SK-N-SH (cell line): ENCODE measurements at regions of chr14 and their contacts with region 1.

Region 1: GRCh38 chr14:68911594-68912227 is 67.4 kb downstream of the ACTN1 start:
- DNase-seq: peak; percentile 92
- H3K4me3 ChIP-seq: no peak overlapping the region; a peak in 1 of 4 replicates
- H3K27ac ChIP-seq: peak overlapping the region in 1 of 2 experiments; percentile 51; a peak in 2 of 4 replicates
- H3K4me1 ChIP-seq: peaks cover 0 to 3% of the 10 kb centered on the region in 2 experiments; a peak in 1 of 4 replicates
- H3K27me3 ChIP-seq: no peaks in the 10 kb centered on the region
- CTCF ChIP-seq: peak; percentile 99
- EP300 ChIP-seq: no peak
- RAD21 ChIP-seq: peak; percentile 95

Region 2: GRCh38 chr14:68862954-68863594 is 48.6 kb before region 1 on chr14:
- CTCF ChIA-PET with region 1: interaction called, 17 read pairs
- POLR2A ChIA-PET with region 1: no interaction called
- DNase-seq: peak; percentile 79
- H3K4me3 ChIP-seq: no peak overlapping the region; a peak in 1 of 4 replicates
- H3K27ac ChIP-seq: no peak overlapping the region
- H3K4me1 ChIP-seq: no peaks in the 10 kb centered on the region
- H3K27me3 ChIP-seq: no peaks in the 10 kb centered on the region
- CTCF ChIP-seq: peak; percentile 84
- EP300 ChIP-seq: no peak
- RAD21 ChIP-seq: peak; percentile 88

Region 3: DNA sequence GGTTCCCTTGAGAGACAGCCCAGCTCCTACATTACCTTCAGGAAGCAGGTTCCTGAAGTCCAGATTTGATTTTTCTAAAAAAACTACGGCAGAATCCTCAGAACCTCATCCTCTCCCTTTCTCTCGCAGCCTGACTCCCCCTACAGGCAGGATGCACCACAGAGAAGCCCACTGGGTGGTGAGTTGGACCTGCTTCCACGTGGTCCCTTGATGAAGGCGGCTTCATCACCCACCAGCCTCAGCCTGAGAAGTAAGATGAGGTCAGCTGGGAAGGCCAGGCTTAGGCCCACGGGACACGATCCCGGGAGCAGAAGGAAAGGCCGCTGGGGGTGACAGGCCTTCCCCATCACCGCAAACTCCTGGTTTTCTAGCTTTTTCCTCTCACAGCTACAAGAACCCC is 15.6 kb before region 1 on chr14:
- CTCF ChIA-PET with region 1: interaction called, 51 read pairs
- POLR2A ChIA-PET with region 1: no interaction called
- DNase-seq: no peak
- H3K4me3 ChIP-seq: no peak overlapping the region
- H3K27ac ChIP-seq: no peak overlapping the region
- H3K4me1 ChIP-seq: no peaks in the 10 kb centered on the region
- H3K27me3 ChIP-seq: no peaks in the 10 kb centered on the region
- CTCF ChIP-seq: peak; percentile 34
- EP300 ChIP-seq: no peak
- RAD21 ChIP-seq: no peak

Region 4: DNA sequence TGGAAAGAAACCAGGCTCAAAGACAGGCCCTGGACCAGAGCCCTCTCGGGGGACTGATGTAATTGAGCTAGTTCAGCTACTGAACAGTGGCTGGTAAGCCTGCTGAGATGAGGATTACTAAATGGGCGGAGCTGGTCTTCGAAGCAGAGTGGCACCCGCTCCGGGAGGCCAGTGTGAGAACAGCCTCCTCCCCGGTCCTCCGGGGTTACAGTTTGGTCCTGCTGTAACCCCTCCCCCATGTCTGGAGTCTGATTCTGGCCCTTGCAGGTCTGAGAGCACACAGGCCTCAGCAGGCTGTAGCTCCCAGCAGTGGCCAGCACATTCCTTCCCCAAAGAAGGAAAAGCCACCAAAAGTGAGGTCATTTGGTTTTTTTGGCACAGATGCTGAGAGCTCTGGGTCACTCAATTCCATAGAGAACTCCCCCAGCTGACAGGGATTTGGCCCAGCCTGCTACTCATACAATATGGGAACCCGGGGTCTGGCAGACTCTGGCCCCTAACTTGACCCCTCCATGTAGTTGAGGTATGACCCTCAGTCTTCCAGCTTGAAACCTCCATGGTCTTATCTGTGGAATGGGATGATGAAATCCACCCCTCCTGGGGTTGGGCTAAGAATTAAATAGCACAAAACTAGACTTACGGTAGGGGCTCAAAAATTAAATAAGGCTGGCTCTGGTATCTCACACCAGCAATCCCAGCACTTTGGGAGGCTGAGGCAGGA is 28.3 kb after region 1 on chr14:
- CTCF ChIA-PET with region 1: interaction called, 25 read pairs
- POLR2A ChIA-PET with region 1: no interaction called
- DNase-seq: peak; percentile 51
- H3K4me3 ChIP-seq: no peak overlapping the region
- H3K27ac ChIP-seq: peak overlapping the region; percentile 92 to 99
- H3K4me1 ChIP-seq: peaks cover 71 to 90% of the 10 kb centered on the region in 2 experiments
- H3K27me3 ChIP-seq: no peaks in the 10 kb centered on the region
- CTCF ChIP-seq: no peak
- EP300 ChIP-seq: peak; percentile 35 to 73; a peak in 2 of 4 replicates
- RAD21 ChIP-seq: no peak

Region 5: GRCh38 chr14:69055999-69056788 is 144.5 kb after region 1 on chr14:
- CTCF ChIA-PET with region 1: interaction called, 14 read pairs
- POLR2A ChIA-PET with region 1: no interaction called
- DNase-seq: peak; percentile 69
- H3K4me3 ChIP-seq: no peak overlapping the region
- H3K27ac ChIP-seq: peak overlapping the region; percentile 13 to 89; a peak in 3 of 4 replicates
- H3K4me1 ChIP-seq: peaks cover 13 to 28% of the 10 kb centered on the region in 2 experiments; a peak in 3 of 4 replicates
- H3K27me3 ChIP-seq: no peaks in the 10 kb centered on the region
- CTCF ChIP-seq: no peak
- EP300 ChIP-seq: no peak
- RAD21 ChIP-seq: peak; percentile 70

Region 6: DNA sequence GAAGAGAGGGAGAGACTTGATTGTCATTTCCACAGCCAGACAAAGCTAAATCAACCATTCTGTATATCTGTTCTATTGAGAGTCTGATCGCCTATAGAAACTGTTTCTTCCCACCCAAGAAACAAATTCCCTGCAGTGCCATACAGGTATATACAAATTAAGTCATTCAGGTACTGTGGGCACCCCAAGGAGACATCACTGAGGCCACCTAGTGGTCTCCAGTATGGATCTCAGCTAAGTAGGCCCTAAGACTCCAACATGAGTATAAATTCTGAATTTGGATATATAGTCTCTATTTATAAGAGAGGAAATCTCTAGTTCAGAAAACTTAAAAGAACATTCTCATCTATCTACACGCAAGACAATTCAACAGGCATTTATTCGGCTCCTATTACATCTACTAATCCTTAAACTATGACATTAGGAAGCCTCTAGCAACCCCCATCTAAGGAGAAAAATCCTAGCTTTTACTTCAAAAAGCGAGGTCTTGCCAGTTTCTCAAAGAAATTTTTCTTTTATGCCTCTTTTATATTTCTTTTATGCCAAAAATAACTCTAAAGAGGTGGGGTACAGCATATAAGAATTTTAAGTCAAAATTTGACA is 178.6 kb after region 1 on chr14:
- CTCF ChIA-PET with region 1: interaction called, 68 read pairs
- POLR2A ChIA-PET with region 1: no interaction called
- DNase-seq: peak; percentile 32
- H3K4me3 ChIP-seq: no peak overlapping the region
- H3K27ac ChIP-seq: peak overlapping the region in 1 of 2 experiments; percentile 90; a peak in 2 of 4 replicates
- H3K4me1 ChIP-seq: peaks cover 22 to 29% of the 10 kb centered on the region in 2 experiments
- H3K27me3 ChIP-seq: no peaks in the 10 kb centered on the region
- CTCF ChIP-seq: peak; percentile 87
- EP300 ChIP-seq: no peak
- RAD21 ChIP-seq: peak; percentile 77

Region 7: GRCh38 chr14:69107407-69108003 is 195.8 kb after region 1 on chr14:
- CTCF ChIA-PET with region 1: interaction called, 90 read pairs
- POLR2A ChIA-PET with region 1: no interaction called
- DNase-seq: peak; percentile 61
- H3K4me3 ChIP-seq: no peak overlapping the region
- H3K27ac ChIP-seq: no peak overlapping the region
- H3K4me1 ChIP-seq: no peaks in the 10 kb centered on the region; a peak in 1 of 4 replicates
- H3K27me3 ChIP-seq: no peaks in the 10 kb centered on the region
- CTCF ChIP-seq: peak; percentile 81
- EP300 ChIP-seq: no peak
- RAD21 ChIP-seq: peak; percentile 92